ENCODE measurements at regions of chr12 and their contacts with region 1.

Region 1: DNA sequence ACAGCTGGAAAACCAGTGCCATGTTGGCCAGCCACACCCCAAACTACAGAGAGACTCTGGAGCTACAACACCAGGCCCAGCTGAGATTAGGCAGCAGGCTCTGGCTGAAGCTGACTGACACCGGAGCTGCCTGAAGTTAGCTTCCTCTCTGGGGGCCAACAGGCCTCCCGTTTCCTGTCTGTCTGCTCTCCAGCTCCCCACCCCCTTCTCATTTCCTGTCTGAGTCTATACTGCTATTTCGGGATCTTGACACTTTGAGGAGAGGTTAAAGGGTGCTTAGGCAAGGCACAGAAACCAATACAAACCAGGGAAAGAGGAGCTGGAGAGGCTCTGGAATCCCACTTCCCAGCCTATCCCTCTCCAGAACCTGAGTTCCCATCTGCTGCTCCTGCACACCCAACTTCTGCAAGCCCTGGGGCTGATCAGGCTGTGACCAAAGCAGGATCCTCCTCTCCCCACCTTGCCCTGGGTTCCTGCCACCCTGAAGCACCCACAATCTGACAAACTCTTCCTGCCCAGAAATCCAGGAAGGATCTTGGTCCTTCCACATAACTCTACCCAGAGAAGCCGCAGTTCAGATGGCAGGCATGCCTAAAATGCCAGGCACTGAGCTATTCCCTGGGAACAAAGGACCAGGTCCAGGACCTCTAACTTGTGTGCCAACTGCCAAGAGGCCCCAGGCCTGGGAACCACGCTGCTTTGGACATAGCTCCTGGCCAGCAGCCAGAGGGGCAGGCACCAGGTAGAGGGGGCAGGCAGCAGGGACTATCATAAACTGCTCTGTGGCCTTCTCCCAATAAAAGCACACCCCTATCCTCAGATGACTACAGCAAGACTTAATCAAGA is 39.9 kb downstream of the PRPF40B start:
- DNase-seq: peak; percentile 46
- H3K4me3 ChIP-seq: no peak overlapping the region
- H3K27ac ChIP-seq: peak overlapping the region; percentile 89
- H3K27me3 ChIP-seq: no peaks in the 10 kb centered on the region
- CTCF ChIP-seq: no peak

Region 2: DNA sequence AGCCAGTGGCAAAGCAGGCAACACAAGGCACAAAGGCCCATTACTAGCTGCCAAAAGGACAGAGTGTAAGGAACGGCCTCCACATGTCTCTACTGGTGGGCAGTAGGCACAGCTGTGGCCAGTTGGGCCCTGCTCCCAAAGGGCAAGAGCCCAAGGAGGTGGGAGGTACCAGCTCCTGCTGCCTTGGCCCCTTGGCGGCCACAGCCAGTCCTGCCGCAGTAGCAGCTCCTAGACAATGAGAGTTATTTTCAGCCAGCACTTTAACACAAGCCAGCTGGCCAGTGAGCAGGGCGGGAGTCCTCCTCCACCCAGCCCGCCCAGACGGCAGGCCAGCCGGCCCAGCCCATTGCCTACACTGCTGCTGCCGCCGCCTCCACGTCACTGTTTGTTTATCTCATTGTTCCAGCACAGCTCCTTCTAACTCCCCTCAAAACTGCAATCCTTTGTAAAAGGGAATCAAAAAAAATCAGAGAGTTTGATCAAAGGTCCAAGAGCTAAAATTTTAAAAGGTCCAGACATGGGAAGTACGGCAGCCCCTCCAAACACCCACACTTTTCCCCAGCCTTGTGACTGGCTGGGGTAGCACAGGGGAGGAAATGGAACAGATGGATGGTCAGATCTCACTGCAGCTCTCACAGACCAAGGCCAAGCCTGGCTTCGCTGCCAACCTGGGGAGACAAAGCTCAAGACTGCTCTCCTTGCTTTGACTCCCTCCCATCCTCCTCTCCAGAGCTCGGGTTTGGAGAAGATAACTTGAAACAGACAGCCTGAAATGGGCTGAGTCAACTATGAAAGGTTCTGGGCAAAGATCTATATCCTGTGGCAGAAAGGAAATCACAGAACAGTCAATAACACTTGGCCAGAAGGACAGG is 10.5 kb after region 1 on chr12:
- CTCF ChIA-PET with region 1: interaction called, 8 read pairs
- POLR2A ChIA-PET with region 1: interaction called, 17 read pairs
- DNase-seq: peak; percentile 88
- H3K4me3 ChIP-seq: peak overlapping the region; percentile 34
- H3K27ac ChIP-seq: peak overlapping the region; percentile 99
- H3K27me3 ChIP-seq: no peaks in the 10 kb centered on the region
- CTCF ChIP-seq: peak; percentile 46